ENCODE measurements at regions of chr1 and their contacts with region 1.

Region 1: GRCh38 chr1:56484695-56485094 is 94.7 kb downstream of the PLPP3 start:
- DNase-seq: no peak
- H3K4me3 ChIP-seq: no peak overlapping the region
- H3K27ac ChIP-seq: no peak overlapping the region
- H3K4me1 ChIP-seq: no peaks in the 10 kb centered on the region
- H3K27me3 ChIP-seq: no peaks in the 10 kb centered on the region
- CTCF ChIP-seq: no peak
- POLR2A ChIP-seq: no peak

Region 2: DNA sequence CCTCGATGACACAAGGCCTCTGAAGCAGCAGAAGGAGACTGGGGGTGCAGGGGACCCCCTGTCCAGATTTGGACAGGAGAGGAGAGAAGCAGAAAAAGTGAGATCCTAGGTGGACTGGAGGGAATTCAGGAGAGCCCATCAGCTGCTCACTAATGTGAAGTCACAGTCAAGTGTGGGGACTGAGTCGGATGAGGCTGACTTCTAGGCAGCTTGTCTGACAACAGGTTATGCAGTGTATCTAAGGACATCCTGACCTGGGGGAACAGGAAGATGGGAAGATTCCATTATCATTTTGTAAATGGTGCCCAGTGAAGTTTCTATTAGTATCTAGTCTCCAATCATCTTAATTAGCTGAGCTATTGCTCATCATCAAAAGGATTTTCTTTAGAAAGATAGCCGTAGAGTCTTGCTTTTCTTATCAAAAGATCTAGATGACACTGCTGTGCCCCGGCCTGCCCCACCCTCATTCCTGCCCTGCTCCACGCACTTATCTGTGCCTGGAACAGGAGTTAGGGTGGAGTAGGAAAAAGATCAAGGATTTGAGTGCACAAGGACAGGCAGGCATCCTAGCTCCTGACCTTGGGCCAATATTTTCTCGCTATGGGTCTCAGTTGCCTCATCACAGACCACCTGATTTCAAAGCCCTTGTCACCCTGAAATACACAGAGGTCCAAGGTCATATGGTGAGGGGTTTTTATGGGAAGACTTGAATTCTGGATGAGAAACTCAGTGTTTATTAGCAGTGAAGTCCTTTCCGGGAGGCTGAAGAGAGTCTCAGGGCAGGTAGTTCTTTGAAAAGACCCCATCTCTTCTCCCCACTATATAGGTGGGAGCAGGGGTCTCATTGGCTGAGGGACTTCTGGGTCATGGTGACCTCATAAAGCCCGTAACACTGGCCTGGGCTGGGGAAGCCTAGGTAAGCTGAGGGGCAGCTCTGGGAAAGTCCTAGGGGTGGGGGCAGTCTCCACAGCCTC is 1843.5 kb before region 1 on chr1 and contains the start of gene MROH7:
- intact Hi-C with region 1: loop called (anchors 5 kb)
- DNase-seq: peak in 1 of 2 donors; percentile 47
- H3K4me3 ChIP-seq: no peak within 1 kb of the TSS
- H3K27ac ChIP-seq: no peak within 1 kb of the TSS
- H3K4me1 ChIP-seq: peaks cover 3% of the 10 kb centered on the region
- H3K27me3 ChIP-seq: no peaks in the 10 kb centered on the region
- CTCF ChIP-seq: no peak
- POLR2A ChIP-seq: no peak
- total RNA-seq, gene MROH7: 7.4 TPM

Region 3: GRCh38 chr1:54965624-54966340 is 1518.9 kb before region 1 on chr1:
- intact Hi-C with region 1: no loop called
- DNase-seq: no peak
- H3K4me3 ChIP-seq: no peak overlapping the region
- H3K27ac ChIP-seq: no peak overlapping the region
- H3K4me1 ChIP-seq: no peaks in the 10 kb centered on the region
- H3K27me3 ChIP-seq: no peaks in the 10 kb centered on the region
- CTCF ChIP-seq: no peak
- POLR2A ChIP-seq: no peak

Region 4: GRCh38 chr1:56424744-56425508 is 59.8 kb before region 1 on chr1:
- intact Hi-C with region 1: no loop called
- DNase-seq: no peak
- H3K4me3 ChIP-seq: no peak overlapping the region
- H3K27ac ChIP-seq: no peak overlapping the region
- H3K4me1 ChIP-seq: no peaks in the 10 kb centered on the region
- H3K27me3 ChIP-seq: no peaks in the 10 kb centered on the region
- CTCF ChIP-seq: no peak
- POLR2A ChIP-seq: no peak

Region 5: GRCh38 chr1:56533621-56534020 is 48.9 kb after region 1 on chr1:
- intact Hi-C with region 1: no loop called
- DNase-seq: no peak
- H3K4me3 ChIP-seq: no peak overlapping the region
- H3K27ac ChIP-seq: no peak overlapping the region
- H3K4me1 ChIP-seq: peaks cover 93% of the 10 kb centered on the region
- H3K27me3 ChIP-seq: no peaks in the 10 kb centered on the region
- CTCF ChIP-seq: no peak
- POLR2A ChIP-seq: no peak

Measured in vagina (tissue), 2 donors.